A673 (cell line): ENCODE measurements at regions of chr17 and their contacts with region 1.

Region 1: GRCh38 chr17:58658804-58659713 is 32.8 kb downstream of the TEX14 start:
- DNase-seq: peak; percentile 97
- H3K4me3 ChIP-seq: peak overlapping the region; percentile 47
- H3K27ac ChIP-seq: peak overlapping the region; percentile 97
- H3K4me1 ChIP-seq: no peaks in the 10 kb centered on the region
- H3K27me3 ChIP-seq: no peaks in the 10 kb centered on the region
- CTCF ChIP-seq: no peak

Region 2: GRCh38 chr17:58303971-58304725 is 354.9 kb before region 1 on chr17:
- CTCF ChIA-PET with region 1: no interaction called
- POLR2A ChIA-PET with region 1: interaction called, 13 read pairs
- intact Hi-C with region 1: no loop called
- DNase-seq: peak; percentile 75
- H3K4me3 ChIP-seq: no peak overlapping the region
- H3K27ac ChIP-seq: no peak overlapping the region
- H3K4me1 ChIP-seq: no peaks in the 10 kb centered on the region
- H3K27me3 ChIP-seq: peaks cover 5% of the 10 kb centered on the region
- CTCF ChIP-seq: peak; percentile 91

Region 3: DNA sequence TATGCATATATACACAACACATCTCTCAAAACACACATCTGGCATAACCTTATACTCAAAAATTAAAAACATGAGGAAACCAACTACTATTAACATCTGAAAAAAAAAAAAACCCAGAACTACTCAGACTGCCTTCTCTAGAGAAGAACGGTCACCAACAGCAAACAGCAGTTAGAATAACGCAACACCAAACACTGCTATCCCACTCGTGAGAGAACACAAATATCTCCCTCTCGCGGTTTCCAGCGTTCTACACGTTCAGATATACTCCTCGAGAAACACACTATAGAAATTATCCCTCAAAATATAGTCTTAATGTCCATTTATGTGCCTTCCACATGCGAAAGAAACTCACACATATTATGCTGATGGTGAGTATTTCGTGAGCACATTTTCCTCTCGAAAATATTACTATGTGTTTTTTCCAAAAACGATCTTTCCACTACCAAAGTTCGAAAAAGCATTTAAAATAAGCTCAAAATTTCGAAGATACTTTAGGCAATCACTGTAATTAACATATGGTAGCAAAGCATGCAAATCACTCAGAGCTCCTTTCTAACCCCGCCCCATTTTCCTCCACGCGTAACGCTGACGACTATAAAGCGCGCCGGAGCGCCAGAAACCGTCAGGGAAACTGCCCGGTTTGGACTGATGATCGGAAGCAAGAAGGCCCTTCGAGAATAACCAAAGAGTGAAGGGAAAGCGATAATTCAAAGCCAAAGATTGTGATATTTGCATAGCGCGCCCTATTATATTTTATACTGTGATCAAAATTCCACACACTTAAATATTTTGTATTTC is 27.3 kb before region 1 on chr17:
- CTCF ChIA-PET with region 1: interaction called, 5 read pairs
- POLR2A ChIA-PET with region 1: interaction called, 17 read pairs
- intact Hi-C with region 1: loop called (anchors 1 kb)
- DNase-seq: peak; percentile 98
- H3K4me3 ChIP-seq: peak overlapping the region; percentile 35
- H3K27ac ChIP-seq: peak overlapping the region; percentile 97
- H3K4me1 ChIP-seq: peaks cover 7% of the 10 kb centered on the region
- H3K27me3 ChIP-seq: no peaks in the 10 kb centered on the region
- CTCF ChIP-seq: peak; percentile 40

Region 4: GRCh38 chr17:58643140-58643539 is 15.9 kb before region 1 on chr17:
- CTCF ChIA-PET with region 1: no interaction called
- POLR2A ChIA-PET with region 1: no interaction called
- intact Hi-C with region 1: no loop called
- DNase-seq: no peak
- H3K4me3 ChIP-seq: no peak overlapping the region
- H3K27ac ChIP-seq: no peak overlapping the region
- H3K4me1 ChIP-seq: no peaks in the 10 kb centered on the region
- H3K27me3 ChIP-seq: no peaks in the 10 kb centered on the region
- CTCF ChIP-seq: no peak

Region 5: GRCh38 chr17:58692239-58693055 is 33.4 kb after region 1 on chr17 and contains the start of gene RAD51C:
- CTCF ChIA-PET with region 1: no interaction called
- POLR2A ChIA-PET with region 1: no interaction called
- intact Hi-C with region 1: loop called (anchors 2 kb)
- DNase-seq: peak; percentile 92
- H3K4me3 ChIP-seq: peak within 1 kb of the TSS; percentile 60
- H3K27ac ChIP-seq: peak within 1 kb of the TSS; percentile 87
- H3K4me1 ChIP-seq: peaks cover 6% of the 10 kb centered on the region
- H3K27me3 ChIP-seq: no peaks in the 10 kb centered on the region
- CTCF ChIP-seq: no peak
- total RNA-seq, gene RAD51C: 79.8 and 80.4 TPM in 2 replicates

Region 6: DNA sequence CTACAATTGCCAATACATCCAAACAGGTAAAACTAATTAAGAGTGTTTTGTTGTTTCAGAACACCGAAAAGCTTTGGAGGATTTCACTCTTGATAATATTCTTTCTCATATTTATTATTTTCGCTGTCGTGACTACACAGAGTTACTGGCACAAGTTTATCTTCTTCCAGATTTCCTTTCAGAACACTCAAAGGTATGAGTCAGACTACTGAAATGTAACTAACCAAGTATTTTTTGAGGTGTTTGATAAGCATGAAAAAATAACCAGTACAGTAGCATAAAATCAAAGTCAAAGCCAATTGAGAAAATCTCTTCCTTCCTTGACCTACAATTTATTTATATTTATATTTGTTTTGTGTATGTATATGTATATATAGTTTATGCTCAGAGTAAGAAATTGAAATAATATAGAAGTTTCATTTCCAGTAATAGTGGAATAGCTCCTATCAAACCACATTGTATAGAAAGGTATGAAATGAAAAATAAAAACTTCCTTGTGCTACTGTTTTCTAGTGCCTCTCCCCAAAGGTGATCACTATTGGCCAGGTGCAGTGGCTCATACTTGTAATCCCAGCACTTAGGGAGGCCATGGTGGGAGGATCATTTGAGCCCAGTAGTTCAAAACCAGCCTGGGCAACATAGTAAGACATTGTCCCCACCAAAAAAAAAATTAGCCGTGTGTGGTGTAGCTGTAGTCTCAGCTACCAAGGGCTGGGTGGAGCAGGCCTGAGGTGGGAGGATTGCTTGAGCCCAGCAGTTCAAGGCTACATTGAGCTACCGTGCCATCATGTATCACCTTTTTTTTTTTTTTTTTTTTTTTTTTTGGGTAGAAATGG is 44.3 kb after region 1 on chr17:
- CTCF ChIA-PET with region 1: no interaction called
- POLR2A ChIA-PET with region 1: no interaction called
- intact Hi-C with region 1: no loop called
- DNase-seq: no peak
- H3K4me3 ChIP-seq: no peak overlapping the region
- H3K27ac ChIP-seq: no peak overlapping the region
- H3K4me1 ChIP-seq: no peaks in the 10 kb centered on the region
- H3K27me3 ChIP-seq: no peaks in the 10 kb centered on the region
- CTCF ChIP-seq: no peak

Region 7: GRCh38 chr17:58734040-58734872 is 75.2 kb after region 1 on chr17:
- CTCF ChIA-PET with region 1: no interaction called
- POLR2A ChIA-PET with region 1: no interaction called
- intact Hi-C with region 1: no loop called
- DNase-seq: no peak
- H3K4me3 ChIP-seq: no peak overlapping the region
- H3K27ac ChIP-seq: no peak overlapping the region
- H3K4me1 ChIP-seq: no peaks in the 10 kb centered on the region
- H3K27me3 ChIP-seq: no peaks in the 10 kb centered on the region
- CTCF ChIP-seq: no peak

Region 8: DNA sequence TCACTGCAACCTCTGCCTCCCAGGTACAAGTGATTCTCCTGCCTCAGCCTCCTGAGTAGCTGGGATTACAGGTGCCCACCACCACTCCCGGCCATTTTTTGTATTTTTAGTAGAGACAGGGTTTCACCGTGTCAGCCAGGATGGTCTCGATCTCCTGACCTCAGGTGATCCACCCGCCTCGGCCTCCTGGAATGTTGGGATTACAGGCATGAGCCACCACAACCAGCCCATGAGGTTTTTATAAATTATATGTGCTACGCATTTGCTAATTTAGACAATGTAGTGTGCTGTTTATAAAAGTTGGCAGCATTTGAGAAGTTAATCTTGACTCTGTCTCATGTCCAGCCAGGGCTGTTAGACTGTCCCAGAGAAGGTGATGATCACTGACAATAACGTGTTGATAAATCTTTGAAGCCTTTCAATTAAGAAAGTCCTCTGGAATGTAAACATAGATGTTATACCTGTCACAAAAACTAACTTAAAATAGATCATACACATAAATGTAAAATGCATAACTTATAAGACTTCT is 178.6 kb after region 1 on chr17:
- CTCF ChIA-PET with region 1: no interaction called
- POLR2A ChIA-PET with region 1: interaction called, 16 read pairs
- intact Hi-C with region 1: no loop called
- DNase-seq: no peak
- H3K4me3 ChIP-seq: no peak overlapping the region
- H3K27ac ChIP-seq: no peak overlapping the region
- H3K4me1 ChIP-seq: no peaks in the 10 kb centered on the region
- H3K27me3 ChIP-seq: no peaks in the 10 kb centered on the region
- CTCF ChIP-seq: no peak

Region 9: DNA sequence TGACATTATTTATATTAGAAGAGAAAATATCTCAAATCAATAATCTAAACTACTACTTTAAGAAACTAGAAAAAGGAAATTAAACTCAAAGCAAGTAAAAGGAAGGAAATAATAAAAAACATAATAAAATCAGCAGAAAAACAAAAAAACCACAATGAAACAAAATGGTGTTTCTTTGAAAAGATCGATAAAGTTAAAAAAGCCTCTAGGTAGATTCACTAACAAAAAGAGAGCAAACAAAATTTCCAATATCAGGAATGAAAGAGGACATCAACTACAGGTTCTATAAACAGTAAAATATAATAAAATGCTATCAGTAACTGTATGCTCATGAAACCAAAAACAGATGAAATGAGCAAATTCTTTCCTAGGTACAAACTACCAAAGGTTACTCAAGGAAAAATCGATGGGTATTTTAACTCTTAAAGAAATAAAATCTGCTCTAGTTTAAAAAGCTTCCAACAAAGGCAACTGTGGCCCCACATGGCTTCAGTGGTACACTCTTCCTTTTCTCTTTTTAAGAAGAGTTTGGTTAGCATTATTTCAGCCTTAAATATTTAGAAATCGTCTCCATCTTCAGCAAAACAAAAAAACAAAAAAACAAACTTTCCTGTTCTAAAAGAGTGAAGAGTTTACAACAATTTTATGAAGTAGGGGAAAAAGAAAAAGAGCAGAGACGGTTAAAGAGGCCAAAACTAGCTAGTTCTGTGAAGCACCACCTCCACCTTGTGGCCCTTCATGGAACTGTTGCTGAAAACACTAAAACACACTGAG is 345.5 kb after region 1 on chr17:
- CTCF ChIA-PET with region 1: no interaction called
- POLR2A ChIA-PET with region 1: no interaction called
- intact Hi-C with region 1: no loop called
- DNase-seq: peak; percentile 75
- H3K4me3 ChIP-seq: no peak overlapping the region
- H3K27ac ChIP-seq: peak overlapping the region; percentile 25
- H3K4me1 ChIP-seq: peaks cover 25% of the 10 kb centered on the region
- H3K27me3 ChIP-seq: no peaks in the 10 kb centered on the region
- CTCF ChIP-seq: peak; percentile 94